Caco-2 (cell line): ENCODE measurements at regions of chr19 and their contacts with region 1.

Region 1: GRCh38 chr19:48872182-48872883 is at the start of gene PPP1R15A:
- DNase-seq: peak; percentile 99
- H3K4me3 ChIP-seq: peak within 1 kb of the TSS; percentile 99
- H3K4me3 Mint-ChIP-seq: peak within 1 kb of the TSS; percentile 99
- H3K27ac Mint-ChIP-seq: peak within 1 kb of the TSS; percentile 100
- H3K4me1 ChIP-seq: peaks cover 56% of the 10 kb centered on the region
- H3K4me1 Mint-ChIP-seq: peaks cover 49% of the 10 kb centered on the region
- H3K27me3 ChIP-seq: no peaks in the 10 kb centered on the region
- H3K27me3 Mint-ChIP-seq: peaks cover 3% of the 10 kb centered on the region
- CTCF ChIP-seq: no peak
- total RNA-seq, gene PPP1R15A: 83.3 and 94.7 TPM in 2 replicates

Region 2: GRCh38 chr19:48965040-48965805 is 92.9 kb after region 1 on chr19 and contains the start of gene FTL:
- CTCF ChIA-PET with region 1: interaction called, 5 read pairs
- POLR2A ChIA-PET with region 1: interaction called, 16 read pairs
- intact Hi-C with region 1: loop called (anchors 1 kb)
- DNase-seq: peak; percentile 99
- H3K4me3 ChIP-seq: peak within 1 kb of the TSS; percentile 95
- H3K4me3 Mint-ChIP-seq: peak within 1 kb of the TSS; percentile 96
- H3K27ac Mint-ChIP-seq: peak within 1 kb of the TSS; percentile 96
- H3K4me1 ChIP-seq: peaks cover 31% of the 10 kb centered on the region
- H3K4me1 Mint-ChIP-seq: peaks cover 40% of the 10 kb centered on the region
- H3K27me3 ChIP-seq: no peaks in the 10 kb centered on the region
- H3K27me3 Mint-ChIP-seq: no peaks in the 10 kb centered on the region
- CTCF ChIP-seq: no peak
- total RNA-seq, gene FTL: 2,542 and 2,963 TPM in 2 replicates

Region 3: DNA sequence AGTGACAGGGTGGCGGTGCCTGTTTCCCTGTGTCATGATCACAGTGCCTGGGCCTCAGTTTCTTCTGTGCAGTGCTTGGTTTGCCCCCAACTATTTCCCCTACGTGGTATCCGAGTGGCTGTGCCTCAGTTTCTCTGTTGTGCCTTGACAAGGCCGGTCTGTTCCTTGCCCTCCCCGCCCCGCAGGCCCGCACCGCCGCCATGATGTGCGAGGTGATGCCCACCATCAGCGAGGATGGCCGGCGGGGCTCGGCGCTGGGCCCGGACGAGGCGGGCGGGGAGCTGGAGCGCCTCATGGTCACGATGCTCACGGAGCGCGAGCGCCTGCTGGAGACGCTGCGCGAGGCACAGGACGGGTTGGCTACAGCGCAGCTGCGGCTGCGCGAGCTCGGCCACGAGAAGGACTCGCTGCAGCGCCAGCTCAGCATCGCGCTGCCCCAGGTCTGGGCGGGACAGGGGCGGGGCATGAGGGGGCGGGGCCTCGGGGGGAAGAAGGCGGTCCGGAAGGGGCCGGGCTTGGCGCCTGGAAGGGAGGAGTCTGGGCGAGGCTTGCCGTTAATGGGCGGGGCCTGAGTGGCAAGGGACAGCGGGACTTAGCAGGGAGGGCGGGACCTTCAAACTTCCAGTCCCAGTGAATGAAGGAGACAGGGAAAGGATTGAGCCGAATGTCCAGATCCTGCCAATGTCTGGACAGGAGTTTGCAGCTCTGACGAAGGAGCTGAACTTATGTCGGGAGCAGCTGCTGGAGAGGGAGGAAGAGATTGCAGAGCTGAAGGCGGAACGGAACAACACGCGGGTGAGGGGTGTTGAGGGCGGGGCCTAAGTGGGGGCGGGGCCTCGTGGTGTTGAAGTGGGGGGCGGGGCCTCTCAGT is 255.6 kb after region 1 on chr19:
- CTCF ChIA-PET with region 1: no interaction called
- POLR2A ChIA-PET with region 1: interaction called, 14 read pairs
- intact Hi-C with region 1: no loop called
- DNase-seq: peak; percentile 98
- H3K4me3 ChIP-seq: peak overlapping the region; percentile 46
- H3K4me3 Mint-ChIP-seq: peak overlapping the region; percentile 85
- H3K27ac Mint-ChIP-seq: peak overlapping the region; percentile 80
- H3K4me1 ChIP-seq: peaks cover 17% of the 10 kb centered on the region; the same call in 1 of the 2 replicates
- H3K4me1 Mint-ChIP-seq: peaks cover 26% of the 10 kb centered on the region
- H3K27me3 ChIP-seq: no peaks in the 10 kb centered on the region
- H3K27me3 Mint-ChIP-seq: no peaks in the 10 kb centered on the region
- CTCF ChIP-seq: peak in 1 of 2 experiments; percentile 16